Activated T-helper 1 cell treated with anti-CD3 and anti-CD28 coated beads, Interleukin-12 subunit alpha, Interleukin-12 subunit beta, Interleukin-2, Interleukin-4 antibody, amounts not matched to agents 30 ng/mL and 10 ng/mL and 1 ng/mL, durations not matched to agents 14 hours and 24 hours and 36 hours (primary cell): ENCODE measurements at regions of chr3 and their contacts with region 1.

Region 1: GRCh38 chr3:10964537-10965167 is 27.9 kb upstream of the SLC6A1 start:
- DNase-seq: no peak
- H3K4me3 Mint-ChIP-seq: no peak overlapping the region
- H3K27ac Mint-ChIP-seq: no peak overlapping the region
- H3K4me1 Mint-ChIP-seq: no peaks in the 10 kb centered on the region
- H3K27me3 Mint-ChIP-seq: peaks cover 4% of the 10 kb centered on the region

Region 2: DNA sequence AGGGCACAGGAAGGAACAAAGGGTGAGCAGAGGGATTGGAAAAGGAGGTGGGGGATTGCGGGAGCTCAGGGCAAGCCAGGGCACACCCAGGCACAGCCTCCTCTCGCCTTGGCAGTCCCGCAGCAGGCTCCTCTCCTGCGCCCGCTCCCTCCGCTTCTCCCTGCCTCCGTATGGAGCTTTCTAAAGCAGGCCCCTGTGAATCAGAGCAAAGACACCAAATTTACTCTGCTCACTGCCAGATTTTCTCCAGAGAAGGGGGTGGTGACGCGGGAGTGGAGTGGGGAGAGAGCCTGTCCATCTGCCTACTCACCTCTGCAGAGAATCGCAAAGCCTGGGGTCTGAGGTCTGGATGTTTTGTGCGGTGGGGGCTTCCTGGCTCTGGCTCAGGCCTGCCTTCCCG is 479.3 kb before region 1 on chr3:
- intact Hi-C with region 1: loop called (anchors 5 kb)
- DNase-seq: no peak
- H3K4me3 Mint-ChIP-seq: no peak overlapping the region
- H3K27ac Mint-ChIP-seq: no peak overlapping the region
- H3K4me1 Mint-ChIP-seq: no peaks in the 10 kb centered on the region
- H3K27me3 Mint-ChIP-seq: peaks cover 3% of the 10 kb centered on the region